ENCODE measurements at regions of chr5 and their contacts with region 1.

Region 1: DNA sequence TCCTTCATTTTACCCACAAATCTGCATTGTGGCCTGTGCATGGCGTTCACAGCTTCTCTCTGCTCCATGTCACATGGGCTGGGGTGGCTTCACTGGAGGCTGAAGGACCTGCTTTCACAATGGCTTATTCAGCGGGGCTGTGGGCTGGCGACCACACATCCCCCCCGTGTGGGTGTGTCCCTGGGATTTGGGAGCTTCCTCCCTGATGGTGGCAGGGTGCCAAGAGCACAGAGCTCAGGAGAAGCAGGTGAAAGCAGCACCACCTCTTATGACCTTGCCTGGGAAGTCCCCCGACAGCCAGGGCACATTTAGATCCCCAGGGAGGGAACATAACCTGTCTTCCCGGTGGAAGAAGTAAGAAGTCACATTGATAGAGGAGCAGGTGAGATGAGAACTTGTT is 5.0 kb upstream of the MED10 start:
- DNase-seq: no peak
- ATAC-seq: no peak

Region 2: DNA sequence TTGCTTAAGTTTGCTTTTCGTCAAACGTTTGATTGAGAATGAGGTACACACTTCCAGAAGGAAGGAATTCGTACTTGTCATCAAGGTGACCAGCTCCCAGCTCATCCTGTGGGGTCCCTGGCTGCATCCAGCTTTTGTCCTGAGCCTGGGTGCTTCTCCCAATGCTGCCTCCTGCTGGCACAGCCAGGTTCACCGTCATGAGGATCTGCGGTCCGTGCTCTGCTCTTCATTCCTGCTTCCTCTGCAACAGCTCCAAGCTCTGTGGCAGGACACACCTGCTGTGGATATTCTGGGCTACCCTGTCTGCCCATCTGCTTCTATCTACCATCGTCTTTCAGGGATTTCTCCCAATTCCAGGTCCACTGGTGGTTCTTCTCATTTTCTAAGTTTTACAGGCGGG is 52.0 kb after region 1 on chr5:
- intact Hi-C with region 1: no loop called
- DNase-seq: peak; percentile 49
- ATAC-seq: no peak

Region 3: GRCh38 chr5:6448622-6449464 is 65.5 kb after region 1 on chr5 and contains the start of gene UBE2QL1:
- intact Hi-C with region 1: loop called (anchors 5 kb)
- DNase-seq: no peak
- ATAC-seq: peak; percentile 51
- total RNA-seq, gene UBE2QL1: 22.8 TPM